ENCODE measurements at regions of chr7 and their contacts with region 1.

Region 1: DNA sequence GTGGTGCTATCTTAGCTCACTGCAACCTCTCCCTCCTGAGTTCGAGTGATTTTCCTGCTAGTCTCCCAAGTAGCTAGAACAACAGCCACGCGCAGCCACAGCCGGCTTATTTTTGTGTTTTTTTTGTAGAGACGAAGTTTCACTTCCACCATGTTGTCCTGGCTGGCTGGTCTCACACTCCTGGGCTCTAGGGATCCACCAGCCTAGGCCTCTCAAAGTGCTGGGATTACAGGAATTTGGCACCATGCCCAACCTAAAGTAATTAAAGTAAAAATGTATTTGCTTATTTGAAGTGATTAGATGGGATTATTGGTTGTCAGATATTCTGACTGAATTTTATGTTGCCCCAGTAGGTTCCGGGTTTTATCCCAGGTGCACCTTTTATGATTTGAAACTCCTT is 22.7 kb downstream of the LUC7L2 start:
- DNase-seq: no peak
- H3K4me3 ChIP-seq: no peak overlapping the region
- H3K27ac ChIP-seq: no peak overlapping the region
- H3K4me1 ChIP-seq: no peaks in the 10 kb centered on the region
- H3K27me3 ChIP-seq: no peaks in the 10 kb centered on the region
- CTCF ChIP-seq: no peak

Region 2: DNA sequence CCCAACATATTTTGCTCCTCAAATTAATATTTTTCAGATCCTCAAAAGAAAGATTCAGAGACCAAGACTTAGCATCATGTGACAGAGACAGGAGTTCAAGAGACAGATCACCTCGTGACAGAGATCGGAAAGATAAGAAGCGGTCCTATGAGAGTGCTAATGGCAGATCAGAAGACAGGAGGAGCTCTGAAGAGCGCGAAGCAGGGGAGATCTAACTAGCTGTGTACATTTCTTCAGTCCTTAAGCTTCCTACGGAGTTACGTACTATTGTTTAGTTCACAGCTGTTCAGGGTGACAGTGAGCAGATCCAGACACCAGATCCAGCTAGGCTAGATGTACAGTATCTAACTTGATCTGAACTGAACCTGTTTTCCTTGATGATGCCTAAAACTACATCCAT is 39.7 kb after region 1 on chr7:
- CTCF ChIA-PET with region 1: interaction called, 3 read pairs
- POLR2A ChIA-PET with region 1: no interaction called
- intact Hi-C with region 1: loop called (anchors 5 kb)
- DNase-seq: no peak
- H3K4me3 ChIP-seq: no peak overlapping the region
- H3K27ac ChIP-seq: no peak overlapping the region
- H3K4me1 ChIP-seq: no peaks in the 10 kb centered on the region
- H3K27me3 ChIP-seq: no peaks in the 10 kb centered on the region
- CTCF ChIP-seq: no peak